H1 (cell line): ENCODE measurements at regions of chr3 and their contacts with region 1.

Region 1: DNA sequence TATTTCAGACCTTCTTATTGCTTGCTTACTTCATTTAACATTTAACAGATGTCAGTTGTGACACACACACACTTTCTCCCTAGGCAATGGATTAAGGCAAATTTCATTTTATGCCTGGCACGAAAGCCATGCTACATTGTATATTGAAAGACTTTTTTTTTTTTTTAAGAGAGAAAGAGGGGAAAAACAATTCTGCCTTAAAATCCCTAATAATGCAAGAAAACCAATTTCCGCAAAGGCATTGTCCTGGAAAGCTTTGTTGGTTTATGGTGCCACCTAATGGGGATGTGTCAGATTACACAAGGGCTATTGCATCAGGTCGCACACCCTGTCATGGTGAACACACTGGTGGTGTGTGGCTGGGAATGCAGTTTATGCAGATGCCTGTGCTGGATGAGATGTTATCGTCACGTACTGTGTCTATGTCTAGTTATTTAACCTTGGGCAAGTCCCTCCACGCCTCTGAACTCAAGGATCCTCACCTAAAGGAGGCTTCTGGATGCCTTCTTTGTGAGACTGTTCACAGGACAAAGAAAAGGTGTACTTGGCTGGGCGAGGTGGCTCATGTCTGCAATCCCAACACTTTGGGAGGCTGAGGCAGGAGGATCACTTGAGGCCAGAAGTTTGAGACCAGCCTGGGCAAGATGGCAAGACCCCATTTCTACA is 37.3 kb upstream of the RFTN1 start:
- DNase-seq: peak; percentile 36 to 87
- H3K4me3 ChIP-seq: peak overlapping the region in 1 of 4 experiments; percentile 27; a peak in 2 of 8 replicates
- H3K27ac ChIP-seq: no peak overlapping the region
- H3K4me1 ChIP-seq: peaks cover 0 to 4% (median 2%) of the 10 kb centered on the region in 4 experiments; a peak in 4 of 7 replicates
- H3K27me3 ChIP-seq: no peaks in the 10 kb centered on the region
- CTCF ChIP-seq: peak; percentile 73 to 94 (median 90)
- EP300 ChIP-seq: 0 out of 3 replicates have a peak, but pooled peaks of 1 of the 2 experiments have one; percentile 13
- POLR2A ChIP-seq: peak in 1 of 2 experiments; percentile 47; a peak in 1 of 3 replicates
- RAD21 ChIP-seq: peak; percentile 98 to 99

Region 2: GRCh38 chr3:16362770-16363169 is 188.0 kb before region 1 on chr3:
- CTCF ChIA-PET with region 1: interaction called, 10 read pairs
- POLR2A ChIA-PET with region 1: interaction called, 8 read pairs
- DNase-seq: no peak
- H3K4me3 ChIP-seq: no peak overlapping the region
- H3K27ac ChIP-seq: no peak overlapping the region
- H3K4me1 ChIP-seq: no peaks in the 10 kb centered on the region; a peak in 1 of 7 replicates
- H3K27me3 ChIP-seq: no peaks in the 10 kb centered on the region
- CTCF ChIP-seq: no peak
- EP300 ChIP-seq: no peak
- POLR2A ChIP-seq: no peak
- RAD21 ChIP-seq: no peak

Region 3: GRCh38 chr3:16534640-16535262 is 16.1 kb before region 1 on chr3:
- CTCF ChIA-PET with region 1: interaction called, 17 read pairs
- POLR2A ChIA-PET with region 1: interaction called, 4 read pairs
- DNase-seq: no peak
- H3K4me3 ChIP-seq: no peak overlapping the region
- H3K27ac ChIP-seq: no peak overlapping the region
- H3K4me1 ChIP-seq: peaks cover 0 to 14% (median 5%) of the 10 kb centered on the region in 4 experiments; a peak in 4 of 7 replicates
- H3K27me3 ChIP-seq: no peaks in the 10 kb centered on the region
- CTCF ChIP-seq: no peak
- EP300 ChIP-seq: no peak
- POLR2A ChIP-seq: no peak
- RAD21 ChIP-seq: no peak